Psoas muscle (tissue), 8 donors: ENCODE measurements at regions of chr3 and their contacts with region 1.

Region 1: DNA sequence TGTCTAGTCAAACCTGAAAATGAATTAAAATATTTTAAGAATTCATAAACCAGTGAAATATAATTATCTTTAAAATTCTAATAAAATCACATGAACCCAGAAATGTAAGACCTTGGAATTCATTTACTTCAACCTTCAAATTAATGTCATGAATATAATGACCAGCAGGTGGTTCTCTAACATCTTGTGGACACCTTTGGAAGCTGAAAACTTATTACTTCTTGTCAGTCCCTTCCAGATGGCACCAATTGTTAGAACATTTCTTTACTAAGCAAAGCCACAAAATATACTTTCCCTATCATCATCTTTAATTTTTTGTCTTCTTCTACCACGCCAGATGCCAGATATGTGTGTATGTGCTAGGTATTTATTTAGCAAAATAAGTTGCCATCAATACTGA is 240.0 kb downstream of the MBNL1 start:
- DNase-seq: no peak
- ATAC-seq: peak in 1 of 4 donors; percentile 55
- H3K4me3 ChIP-seq: no peak overlapping the region
- H3K27ac ChIP-seq: no peak overlapping the region
- H3K4me1 ChIP-seq: no peaks in the 10 kb centered on the region
- H3K27me3 ChIP-seq: no peaks in the 10 kb centered on the region
- CTCF ChIP-seq: peak; percentile 42

Region 2: DNA sequence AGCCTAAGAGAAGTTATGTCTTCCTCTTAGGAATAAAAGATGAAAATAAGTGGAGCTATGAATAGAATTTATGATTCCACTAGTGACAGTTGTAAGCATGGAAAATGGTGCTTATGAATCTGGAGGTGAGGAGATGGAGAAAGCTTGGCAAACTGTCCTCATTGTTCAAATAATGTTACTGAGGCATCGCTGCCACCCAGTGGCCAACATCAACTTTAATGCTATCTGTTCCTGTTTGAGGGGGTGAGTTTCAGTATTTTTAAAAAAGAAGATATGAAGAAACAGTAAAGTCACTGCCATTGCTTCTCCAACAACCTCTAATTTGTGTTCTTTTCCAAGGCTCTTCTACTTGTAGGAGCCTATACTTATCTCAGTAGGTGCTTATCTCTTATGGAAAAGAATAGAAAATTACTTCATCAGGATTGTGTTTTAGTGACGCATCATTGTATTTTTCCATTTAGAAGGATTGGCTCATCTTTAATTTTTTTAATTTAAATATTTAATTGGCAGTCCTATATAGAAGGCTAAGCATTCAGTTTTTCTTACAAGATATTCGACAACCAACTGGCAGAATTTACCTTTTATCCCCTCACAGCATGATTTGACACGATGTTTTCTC is 65.9 kb after region 1 on chr3:
- intact Hi-C with region 1: loop called (anchors 2 to 5 kb)
- DNase-seq: peak; percentile 49 to 75
- ATAC-seq: peak; percentile 52 to 83 (median 73)
- H3K4me3 ChIP-seq: no peak overlapping the region
- H3K27ac ChIP-seq: no peak overlapping the region
- H3K4me1 ChIP-seq: no peaks in the 10 kb centered on the region
- H3K27me3 ChIP-seq: no peaks in the 10 kb centered on the region
- CTCF ChIP-seq: peak; percentile 61